ENCODE measurements at regions of chr2 and their contacts with region 1.

Region 1: GRCh38 chr2:42663106-42663780 is 94.8 kb downstream of the MTA3 start:
- DNase-seq: peak; percentile 54 to 69
- H3K4me3 ChIP-seq: no peak overlapping the region
- H3K27ac ChIP-seq: no peak overlapping the region
- H3K4me1 ChIP-seq: no peaks in the 10 kb centered on the region
- H3K27me3 ChIP-seq: no peaks in the 10 kb centered on the region
- CTCF ChIP-seq: peak; percentile 91 to 94

Region 2: GRCh38 chr2:42513257-42513918 is 149.9 kb before region 1 on chr2:
- intact Hi-C with region 1: loop called (anchors 5 kb)
- DNase-seq: no peak
- H3K4me3 ChIP-seq: no peak overlapping the region
- H3K27ac ChIP-seq: no peak overlapping the region
- H3K4me1 ChIP-seq: no peaks in the 10 kb centered on the region
- H3K27me3 ChIP-seq: no peaks in the 10 kb centered on the region
- CTCF ChIP-seq: peak; percentile 59 to 62

Region 3: DNA sequence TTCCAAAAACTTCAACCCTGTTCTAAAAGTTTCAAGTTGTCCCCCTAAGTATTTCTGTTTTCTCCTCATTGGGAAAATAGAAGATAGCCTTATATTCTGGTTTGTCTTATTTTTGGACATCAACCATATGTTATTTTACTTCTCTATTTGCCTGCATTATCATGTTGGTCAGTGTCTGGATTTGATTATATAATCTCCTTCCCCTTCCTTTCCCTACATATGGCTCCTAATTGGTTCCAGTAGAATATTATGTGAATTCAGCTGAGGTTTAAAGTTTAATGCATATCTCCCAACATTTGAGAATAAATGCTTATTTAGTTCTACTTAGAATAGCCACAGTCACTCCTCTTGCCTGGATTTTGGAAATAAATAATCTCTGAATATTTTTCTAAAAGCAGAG is 33.7 kb after region 1 on chr2:
- intact Hi-C with region 1: no loop called
- DNase-seq: no peak
- H3K4me3 ChIP-seq: no peak overlapping the region
- H3K27ac ChIP-seq: no peak overlapping the region
- H3K4me1 ChIP-seq: peaks cover 0 to 20% (median 0%) of the 10 kb centered on the region in 4 donors
- H3K27me3 ChIP-seq: no peaks in the 10 kb centered on the region
- CTCF ChIP-seq: no peak